Activated CD4-positive, alpha-beta T cell treated with anti-CD3 and anti-CD28 coated beads, Interleukin-2, amount 10 ng/mL, durations not matched to agents 24 days and 14 days (primary cell): ENCODE measurements at regions of chr1 and their contacts with region 1.

Region 1: GRCh38 chr1:12078938-12079861 is 16.1 kb downstream of the TNFRSF8 start:
- DNase-seq: peak; percentile 81
- H3K4me3 Mint-ChIP-seq: no peak overlapping the region
- H3K27ac Mint-ChIP-seq: peak overlapping the region; percentile 61
- H3K4me1 Mint-ChIP-seq: peaks cover 39% of the 10 kb centered on the region
- H3K27me3 Mint-ChIP-seq: no peaks in the 10 kb centered on the region

Region 2: GRCh38 chr1:12001249-12001917 is 77.8 kb before region 1 on chr1:
- intact Hi-C with region 1: loop called (anchors 5 kb)
- DNase-seq: peak; percentile 87
- H3K4me3 Mint-ChIP-seq: no peak overlapping the region
- H3K27ac Mint-ChIP-seq: peak overlapping the region; percentile 15
- H3K4me1 Mint-ChIP-seq: peaks cover 7% of the 10 kb centered on the region
- H3K27me3 Mint-ChIP-seq: no peaks in the 10 kb centered on the region

Region 3: GRCh38 chr1:12059722-12060464 is 19.3 kb before region 1 on chr1:
- intact Hi-C with region 1: no loop called
- DNase-seq: peak; percentile 68
- H3K4me3 Mint-ChIP-seq: peak overlapping the region; percentile 35
- H3K27ac Mint-ChIP-seq: peak overlapping the region; percentile 39
- H3K4me1 Mint-ChIP-seq: peaks cover 60% of the 10 kb centered on the region
- H3K27me3 Mint-ChIP-seq: peaks cover 4% of the 10 kb centered on the region

Region 4: GRCh38 chr1:12113433-12114339 is 34.5 kb after region 1 on chr1:
- intact Hi-C with region 1: no loop called
- DNase-seq: peak; percentile 75
- H3K4me3 Mint-ChIP-seq: peak overlapping the region; percentile 0
- H3K27ac Mint-ChIP-seq: peak overlapping the region; percentile 75
- H3K4me1 Mint-ChIP-seq: peaks cover 18% of the 10 kb centered on the region
- H3K27me3 Mint-ChIP-seq: no peaks in the 10 kb centered on the region

Region 5: GRCh38 chr1:12591267-12591938 is 512.2 kb after region 1 on chr1:
- intact Hi-C with region 1: no loop called
- DNase-seq: no peak
- H3K4me3 Mint-ChIP-seq: no peak overlapping the region
- H3K27ac Mint-ChIP-seq: no peak overlapping the region
- H3K4me1 Mint-ChIP-seq: peaks cover 17% of the 10 kb centered on the region
- H3K27me3 Mint-ChIP-seq: peaks cover 5% of the 10 kb centered on the region